ENCODE measurements at regions of chr16 and their contacts with region 1.

Region 1: GRCh38 chr16:81526935-81527334 is 82.3 kb downstream of the CMIP start:
- DNase-seq: no peak
- H3K4me3 ChIP-seq: no peak overlapping the region
- CTCF ChIP-seq: no peak

Region 2: DNA sequence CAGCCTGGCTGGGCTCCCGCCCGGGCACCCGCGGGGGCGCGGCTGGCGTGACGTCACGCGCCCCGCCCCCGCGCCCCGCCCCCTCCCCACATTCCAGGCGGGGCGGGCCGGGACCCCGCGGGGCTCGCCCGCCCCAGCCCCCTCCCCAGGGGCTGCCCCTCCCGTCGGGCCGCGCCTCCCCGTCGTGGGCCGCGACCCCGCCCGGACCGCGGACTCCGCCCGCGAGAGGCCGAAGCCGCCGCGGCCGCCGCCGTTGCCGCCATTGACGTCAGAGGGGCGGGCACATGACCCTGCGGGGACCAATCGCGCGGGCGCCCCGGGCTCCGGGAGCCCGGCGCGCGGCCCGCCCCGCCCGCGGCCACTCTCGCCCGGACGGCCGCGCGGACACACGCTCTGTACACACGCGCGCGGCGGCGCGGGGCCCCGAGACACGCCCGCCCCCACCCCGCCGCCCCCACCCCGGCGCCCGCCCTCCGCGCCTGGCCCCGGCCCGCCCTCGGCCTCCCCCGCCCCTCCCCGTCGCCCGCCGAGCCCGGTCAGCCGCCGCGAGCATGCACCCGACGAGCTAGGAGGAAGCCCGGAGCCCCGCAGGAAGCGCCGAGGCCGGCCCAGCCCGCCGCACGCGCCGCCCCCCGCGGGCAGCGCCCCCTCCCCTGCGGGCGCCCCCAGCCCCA is 82.3 kb before region 1 on chr16 and contains the start of gene CMIP:
- in situ Hi-C with region 1: no loop called
- DNase-seq: peak; percentile 43
- H3K4me3 ChIP-seq: peak within 1 kb of the TSS; percentile 86
- CTCF ChIP-seq: no peak

Region 3: DNA sequence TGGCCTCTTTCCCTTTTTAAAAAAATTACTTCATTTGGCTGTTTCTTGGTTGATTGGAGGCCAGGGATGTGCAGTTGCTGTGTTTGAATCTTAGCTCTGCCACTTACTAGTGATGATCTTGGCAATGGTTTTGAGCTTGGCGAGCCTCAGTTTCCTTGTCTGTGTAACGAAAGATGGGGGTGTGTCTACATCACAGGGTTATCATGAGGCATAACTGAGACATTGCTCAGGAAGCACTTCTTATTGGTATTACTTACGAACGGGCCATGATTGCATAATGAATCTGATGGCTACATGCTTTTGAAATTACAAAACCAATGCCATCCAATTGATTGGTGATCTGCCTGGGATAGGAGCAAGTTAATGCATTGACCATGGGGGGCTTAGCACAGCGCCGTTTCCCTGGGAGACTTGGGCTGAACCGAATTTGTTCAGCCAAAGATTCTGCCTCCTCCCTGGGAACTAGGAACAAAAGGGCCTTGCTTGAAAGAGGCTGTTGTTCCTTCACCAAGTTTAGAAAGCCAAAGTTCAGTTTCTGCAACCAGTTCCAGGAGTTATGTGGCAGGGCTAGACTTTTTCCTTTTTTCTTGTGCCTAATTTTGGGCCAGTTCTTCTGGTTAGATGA is 60.5 kb before region 1 on chr16:
- in situ Hi-C with region 1: no loop called
- DNase-seq: no peak
- H3K4me3 ChIP-seq: no peak overlapping the region
- CTCF ChIP-seq: no peak

Region 4: GRCh38 chr16:81481207-81481821 is 45.6 kb before region 1 on chr16:
- in situ Hi-C with region 1: loop called (anchors 5 kb)
- DNase-seq: no peak
- H3K4me3 ChIP-seq: no peak overlapping the region
- CTCF ChIP-seq: no peak